Activated T-helper 2 cell treated with anti-CD3 and anti-CD28 coated beads, Interferon-gamma antibody, Interleukin-2, Interleukin-4, amounts not matched to agents 10 μg/mL and 5 μg/mL and 100 μg/mL, durations not matched to agents 14 hours and 24 hours and 36 hours (primary cell): ENCODE measurements at regions of chr21 and their contacts with region 1.

Region 1: DNA sequence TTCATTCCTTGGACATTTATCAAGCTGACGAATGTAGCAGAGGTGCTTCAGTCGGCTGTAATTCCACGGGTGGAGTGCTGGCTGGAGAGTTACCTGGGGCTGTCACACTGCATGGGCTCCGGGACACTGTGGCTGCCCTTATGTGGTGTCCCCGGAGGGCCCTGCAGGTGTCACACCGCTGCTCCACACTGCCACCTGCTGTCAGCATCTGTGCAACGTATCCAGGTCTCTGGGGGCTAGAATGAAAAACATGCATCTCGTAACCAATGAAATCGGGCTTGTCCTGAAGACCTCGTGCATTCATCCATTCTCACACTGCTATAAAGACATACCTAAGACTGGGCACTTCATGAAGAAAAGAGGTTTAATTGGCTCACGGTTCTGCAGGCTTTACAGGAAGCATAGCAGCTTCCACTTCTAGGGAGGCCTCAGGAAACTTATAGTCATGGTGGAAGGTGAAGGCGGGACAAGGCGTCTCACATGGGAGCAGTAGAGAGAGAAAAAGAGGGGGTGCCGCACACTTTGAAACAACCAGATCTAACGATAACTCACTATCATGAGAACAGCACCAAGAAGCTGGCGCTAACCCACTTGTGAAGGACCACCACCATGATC is 46.7 kb upstream of the PCBP3 start:
- DNase-seq: peak; percentile 72
- H3K4me3 Mint-ChIP-seq: no peak overlapping the region
- H3K27ac Mint-ChIP-seq: no peak overlapping the region
- H3K4me1 Mint-ChIP-seq: peaks cover 15% of the 10 kb centered on the region
- H3K27me3 Mint-ChIP-seq: peaks cover 2% of the 10 kb centered on the region

Region 2: GRCh38 chr21:45478115-45478801 is 118.6 kb before region 1 on chr21:
- intact Hi-C with region 1: loop called (anchors 1 kb)
- DNase-seq: peak; percentile 73
- H3K4me3 Mint-ChIP-seq: peak overlapping the region; percentile 83
- H3K27ac Mint-ChIP-seq: peak overlapping the region; percentile 96
- H3K4me1 Mint-ChIP-seq: peaks cover 22% of the 10 kb centered on the region
- H3K27me3 Mint-ChIP-seq: no peaks in the 10 kb centered on the region